ENCODE measurements at regions of chr2 and their contacts with region 1.

Region 1: DNA sequence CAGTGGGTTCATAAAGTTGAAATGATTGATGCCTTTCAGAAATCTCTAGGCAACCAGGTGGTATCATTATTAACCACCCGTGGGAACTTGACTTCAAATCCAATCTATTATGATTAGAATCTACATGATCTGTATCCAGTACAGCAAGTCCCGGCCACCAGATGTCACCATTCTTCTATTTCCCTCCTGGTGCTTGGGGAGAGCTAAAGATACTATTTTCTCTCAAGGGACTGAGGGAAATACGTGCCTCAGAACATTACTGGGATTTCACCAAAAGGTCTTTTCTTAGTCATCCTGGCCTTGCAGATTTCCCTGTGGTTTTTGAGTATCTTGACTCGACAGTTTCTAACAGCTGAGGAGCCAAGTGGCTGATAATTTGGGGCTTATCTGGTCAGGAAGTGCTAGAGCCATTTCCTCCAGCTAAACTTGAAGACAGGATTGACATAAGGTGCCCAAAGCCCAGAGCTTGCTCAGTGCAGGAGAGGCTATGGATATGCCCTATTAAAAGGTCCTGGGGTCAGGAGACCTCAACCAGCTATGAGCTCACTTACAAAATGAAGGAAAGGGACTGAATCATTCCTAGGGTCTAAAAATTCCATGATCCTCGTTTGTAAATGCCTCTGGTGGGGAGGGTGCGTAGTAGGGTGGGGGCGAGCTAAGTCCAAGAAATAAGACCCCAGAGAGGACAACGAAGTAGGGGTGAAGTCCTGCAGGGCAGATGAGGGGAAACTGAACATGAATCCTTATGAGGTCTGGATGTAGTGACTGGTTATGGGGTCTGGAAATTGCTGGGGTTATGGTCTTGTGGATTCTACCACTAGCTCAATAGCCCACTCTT is 135.4 kb upstream of the MGAT5 start:
- DNase-seq: peak; percentile 91
- ATAC-seq: peak; percentile 43
- H3K4me3 Mint-ChIP-seq: peak overlapping the region; percentile 98
- H3K27ac Mint-ChIP-seq: peak overlapping the region; percentile 4
- H3K4me1 Mint-ChIP-seq: peaks cover 36% of the 10 kb centered on the region
- H3K27me3 Mint-ChIP-seq: peaks cover 5% of the 10 kb centered on the region

Region 2: GRCh38 chr2:134052173-134052572 is 66.3 kb before region 1 on chr2:
- CTCF ChIA-PET with region 1: no interaction called
- POLR2A ChIA-PET with region 1: no interaction called
- DNase-seq: no peak
- ATAC-seq: no peak
- H3K4me3 Mint-ChIP-seq: no peak overlapping the region
- H3K27ac Mint-ChIP-seq: no peak overlapping the region
- H3K4me1 Mint-ChIP-seq: no peaks in the 10 kb centered on the region
- H3K27me3 Mint-ChIP-seq: peaks cover 11% of the 10 kb centered on the region

Region 3: DNA sequence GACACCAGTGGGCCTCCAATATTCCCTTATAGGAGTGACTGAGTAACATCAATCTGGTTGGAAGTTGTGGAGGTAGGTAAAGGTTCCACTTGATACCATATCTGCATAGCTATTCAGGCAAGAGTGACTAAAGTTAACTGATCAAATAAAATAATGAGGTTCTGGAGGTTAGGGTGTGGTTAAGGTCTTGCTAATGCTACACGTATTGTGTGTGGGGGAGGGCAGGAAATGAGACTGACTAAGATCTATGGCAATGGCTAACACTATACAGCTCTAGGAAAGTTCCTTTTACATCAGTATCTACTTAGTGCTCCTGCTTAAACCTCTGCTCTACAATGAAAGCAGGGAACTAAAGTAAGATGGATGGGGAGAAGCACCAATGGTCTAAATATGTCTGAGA is 13.7 kb before region 1 on chr2:
- CTCF ChIA-PET with region 1: interaction called, 13 read pairs
- POLR2A ChIA-PET with region 1: no interaction called
- DNase-seq: peak; percentile 57
- ATAC-seq: peak; percentile 82
- H3K4me3 Mint-ChIP-seq: no peak overlapping the region
- H3K27ac Mint-ChIP-seq: no peak overlapping the region
- H3K4me1 Mint-ChIP-seq: peaks cover 14% of the 10 kb centered on the region
- H3K27me3 Mint-ChIP-seq: peaks cover 5% of the 10 kb centered on the region

Region 4: DNA sequence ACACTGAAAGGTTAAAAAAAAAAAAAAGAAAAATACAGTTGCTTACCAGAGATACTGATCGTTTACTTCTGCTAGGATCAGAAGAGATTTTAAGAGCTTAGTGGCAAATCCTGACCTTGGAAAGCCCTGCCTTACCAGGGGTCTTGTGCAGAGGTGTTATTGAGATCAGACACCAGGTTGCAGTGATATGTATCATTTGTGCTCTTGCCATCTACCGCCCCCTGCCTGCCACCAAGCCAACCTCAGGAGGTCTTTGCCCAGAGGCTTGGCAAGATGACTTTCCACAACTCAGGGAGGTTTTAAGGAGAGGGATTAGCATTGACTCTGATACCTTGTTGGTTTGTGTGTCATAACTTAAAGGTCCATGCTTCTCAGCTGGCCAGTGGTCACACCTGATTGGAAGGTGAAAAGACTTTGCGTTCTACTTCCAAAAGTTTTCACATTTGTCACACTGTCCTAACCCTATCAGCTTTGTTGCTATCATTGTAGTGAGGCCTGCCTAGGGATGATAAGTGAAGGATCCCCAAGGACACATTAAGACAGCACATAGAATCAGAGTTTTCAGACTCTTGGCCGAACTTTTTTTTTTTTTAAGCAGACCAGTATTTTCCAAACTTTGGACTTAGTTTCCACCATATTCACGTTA is 89.2 kb after region 1 on chr2:
- CTCF ChIA-PET with region 1: interaction called, 160 read pairs
- POLR2A ChIA-PET with region 1: interaction called, 4 read pairs
- DNase-seq: peak; percentile 68
- ATAC-seq: peak; percentile 90
- H3K4me3 Mint-ChIP-seq: no peak overlapping the region
- H3K27ac Mint-ChIP-seq: no peak overlapping the region
- H3K4me1 Mint-ChIP-seq: peaks cover 10% of the 10 kb centered on the region
- H3K27me3 Mint-ChIP-seq: no peaks in the 10 kb centered on the region

Region 5: GRCh38 chr2:134245340-134245984 is 127.0 kb after region 1 on chr2:
- CTCF ChIA-PET with region 1: interaction called, 109 read pairs
- POLR2A ChIA-PET with region 1: interaction called, 7 read pairs
- DNase-seq: peak; percentile 88
- ATAC-seq: peak; percentile 63
- H3K4me3 Mint-ChIP-seq: peak overlapping the region; percentile 5
- H3K27ac Mint-ChIP-seq: peak overlapping the region; percentile 33
- H3K4me1 Mint-ChIP-seq: peaks cover 79% of the 10 kb centered on the region
- H3K27me3 Mint-ChIP-seq: no peaks in the 10 kb centered on the region

Region 6: DNA sequence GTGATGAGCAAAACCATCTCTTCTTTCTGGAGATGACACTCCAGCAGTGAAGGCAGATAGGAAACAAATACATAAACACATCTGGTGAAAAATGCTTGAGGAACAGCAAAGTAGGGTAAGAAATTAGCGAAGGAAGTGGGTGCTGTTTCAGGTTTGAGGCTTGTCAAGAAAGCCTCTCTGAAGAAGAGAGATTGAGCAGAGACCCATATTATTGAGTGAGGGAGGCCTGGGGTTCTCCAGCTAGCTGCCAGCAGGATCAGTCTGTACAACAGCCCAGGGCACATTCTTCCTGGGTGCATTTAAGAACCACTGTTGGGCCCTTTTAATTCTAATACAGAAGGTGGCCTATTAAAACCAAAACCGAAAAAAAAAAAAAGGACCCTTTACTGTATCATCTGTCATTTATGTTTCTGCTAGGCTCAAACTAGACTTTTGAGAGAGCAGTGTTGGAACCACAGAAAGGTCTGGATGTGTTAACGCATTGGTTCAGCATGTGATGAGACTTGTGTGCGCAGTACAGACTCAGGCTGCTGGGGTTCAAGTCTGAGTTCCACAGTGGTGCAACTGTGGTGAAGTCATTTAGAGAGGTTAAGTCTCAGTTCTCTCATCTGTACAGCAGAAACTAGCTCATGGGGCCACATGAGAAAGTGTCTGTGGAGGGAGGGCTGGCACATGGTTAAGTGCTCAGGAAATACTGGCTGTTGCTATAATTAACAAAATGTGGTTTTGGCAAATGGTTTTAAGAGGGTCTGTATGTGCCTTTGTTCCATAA is 164.3 kb after region 1 on chr2:
- CTCF ChIA-PET with region 1: interaction called, 10 read pairs
- POLR2A ChIA-PET with region 1: interaction called, 3 read pairs
- DNase-seq: peak; percentile 73
- ATAC-seq: peak; percentile 89
- H3K4me3 Mint-ChIP-seq: peak overlapping the region; percentile 62
- H3K27ac Mint-ChIP-seq: peak overlapping the region; percentile 88
- H3K4me1 Mint-ChIP-seq: peaks cover 44% of the 10 kb centered on the region
- H3K27me3 Mint-ChIP-seq: no peaks in the 10 kb centered on the region

Region 7: GRCh38 chr2:134420259-134420658 is 301.8 kb after region 1 on chr2:
- CTCF ChIA-PET with region 1: interaction called, 17 read pairs
- POLR2A ChIA-PET with region 1: no interaction called
- DNase-seq: no peak
- ATAC-seq: no peak
- H3K4me3 Mint-ChIP-seq: no peak overlapping the region
- H3K27ac Mint-ChIP-seq: no peak overlapping the region
- H3K4me1 Mint-ChIP-seq: peaks cover 2% of the 10 kb centered on the region
- H3K27me3 Mint-ChIP-seq: no peaks in the 10 kb centered on the region

Region 8: DNA sequence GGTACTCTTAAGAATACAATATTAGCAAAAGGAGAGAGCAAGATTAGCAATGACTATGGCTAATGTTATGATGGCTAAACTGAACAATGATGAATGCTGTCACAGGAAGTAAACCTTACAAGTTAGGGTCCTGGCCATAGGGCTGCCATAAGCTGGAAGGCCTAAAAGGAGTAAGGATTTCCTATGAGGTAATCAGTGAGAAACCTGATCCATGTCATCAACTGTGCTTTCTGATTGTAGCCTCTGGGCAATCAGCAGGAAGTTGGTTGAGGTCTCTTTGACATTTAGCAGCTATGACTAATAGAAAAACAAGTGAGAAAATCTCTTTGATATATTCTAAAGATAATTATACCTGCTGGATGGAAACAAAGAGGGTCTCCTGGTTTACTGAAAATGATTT is 1126.6 kb after region 1 on chr2:
- CTCF ChIA-PET with region 1: no interaction called
- POLR2A ChIA-PET with region 1: no interaction called
- DNase-seq: peak; percentile 56
- ATAC-seq: peak; percentile 94
- H3K4me3 Mint-ChIP-seq: no peak overlapping the region
- H3K27ac Mint-ChIP-seq: peak overlapping the region; percentile 75
- H3K4me1 Mint-ChIP-seq: peaks cover 26% of the 10 kb centered on the region
- H3K27me3 Mint-ChIP-seq: no peaks in the 10 kb centered on the region

Measured in activated CD8-positive, alpha-beta T cell treated with anti-CD3 and anti-CD28 coated beads, Interleukin-2, amount 10 ng/mL, durations not matched to agents 7 days and 5 days (primary cell).